Activated CD4-positive, alpha-beta T cell treated with anti-CD3 and anti-CD28 coated beads, Interleukin-2, amount 10 ng/mL, durations not matched to agents 24 days and 14 days (primary cell): ENCODE measurements at regions of chr7 and their contacts with region 1.

Region 1: GRCh38 chr7:151415375-151416112 is 5.7 kb upstream of the WDR86 start:
- DNase-seq: no peak
- H3K4me3 Mint-ChIP-seq: no peak overlapping the region
- H3K27ac Mint-ChIP-seq: no peak overlapping the region
- H3K4me1 Mint-ChIP-seq: peaks cover 15% of the 10 kb centered on the region
- H3K27me3 Mint-ChIP-seq: peaks cover 55% of the 10 kb centered on the region

Region 2: DNA sequence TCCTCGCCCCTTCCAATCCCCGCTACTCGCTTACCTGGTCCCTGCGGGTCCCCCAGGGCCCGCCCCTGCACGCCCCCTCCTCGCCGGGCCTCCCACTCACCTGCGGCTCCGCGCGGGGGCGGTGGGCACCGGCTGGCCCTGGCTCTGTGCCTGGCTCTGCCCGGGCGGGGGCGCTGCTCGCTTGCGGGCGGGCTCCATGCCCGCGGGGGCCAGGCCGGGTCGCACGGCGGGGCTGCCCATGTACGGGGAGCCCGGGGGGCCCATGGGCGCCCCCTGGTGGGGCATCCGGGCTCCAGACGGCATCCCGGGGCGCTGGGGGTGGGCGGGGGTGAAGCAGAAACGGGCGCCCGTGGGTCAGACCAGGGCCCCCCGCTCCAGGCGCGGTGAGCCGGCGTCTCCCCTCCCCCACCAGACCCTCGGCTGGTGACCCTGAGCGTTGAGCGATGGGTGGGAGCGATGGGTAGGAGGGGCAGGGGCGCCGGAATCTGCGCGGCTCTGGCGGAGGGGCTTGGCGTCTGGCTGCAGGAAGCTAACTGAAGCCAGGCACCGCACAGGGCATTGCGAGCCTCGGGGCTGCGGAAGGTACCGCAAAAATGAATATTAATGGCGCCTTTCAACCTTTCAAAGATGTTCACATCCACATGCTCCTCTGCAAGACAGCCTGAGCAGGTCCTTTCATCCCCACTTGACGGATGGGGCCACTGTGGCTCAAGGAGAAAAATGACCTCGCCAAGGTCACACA is 170.0 kb before region 1 on chr7:
- intact Hi-C with region 1: no loop called
- DNase-seq: peak; percentile 91
- H3K4me3 Mint-ChIP-seq: peak overlapping the region; percentile 70
- H3K27ac Mint-ChIP-seq: no peak overlapping the region
- H3K4me1 Mint-ChIP-seq: peaks cover 35% of the 10 kb centered on the region
- H3K27me3 Mint-ChIP-seq: peaks cover 42% of the 10 kb centered on the region

Region 3: GRCh38 chr7:151429548-151430331 is 14.2 kb after region 1 on chr7:
- intact Hi-C with region 1: loop called (anchors 2 kb)
- DNase-seq: peak; percentile 90
- H3K4me3 Mint-ChIP-seq: peak overlapping the region; percentile 58
- H3K27ac Mint-ChIP-seq: peak overlapping the region; percentile 54
- H3K4me1 Mint-ChIP-seq: peaks cover 30% of the 10 kb centered on the region
- H3K27me3 Mint-ChIP-seq: peaks cover 2% of the 10 kb centered on the region